Esophagus squamous epithelium (tissue), 5 donors: ENCODE measurements at regions of chr22 and their contacts with region 1.

Region 1: GRCh38 chr22:36144886-36145541 is 15.5 kb downstream of the APOL3 start:
- DNase-seq: no peak
- H3K4me3 ChIP-seq: no peak overlapping the region
- H3K27ac ChIP-seq: peak overlapping the region in 3 of 4 donors; percentile 3 to 48 (median 30)
- H3K4me1 ChIP-seq: peaks cover 0 to 42% (median 15%) of the 10 kb centered on the region in 3 donors
- H3K27me3 ChIP-seq: no peaks in the 10 kb centered on the region
- CTCF ChIP-seq: peak; percentile 52 to 77 (median 70)
- POLR2A ChIP-seq: no peak

Region 2: DNA sequence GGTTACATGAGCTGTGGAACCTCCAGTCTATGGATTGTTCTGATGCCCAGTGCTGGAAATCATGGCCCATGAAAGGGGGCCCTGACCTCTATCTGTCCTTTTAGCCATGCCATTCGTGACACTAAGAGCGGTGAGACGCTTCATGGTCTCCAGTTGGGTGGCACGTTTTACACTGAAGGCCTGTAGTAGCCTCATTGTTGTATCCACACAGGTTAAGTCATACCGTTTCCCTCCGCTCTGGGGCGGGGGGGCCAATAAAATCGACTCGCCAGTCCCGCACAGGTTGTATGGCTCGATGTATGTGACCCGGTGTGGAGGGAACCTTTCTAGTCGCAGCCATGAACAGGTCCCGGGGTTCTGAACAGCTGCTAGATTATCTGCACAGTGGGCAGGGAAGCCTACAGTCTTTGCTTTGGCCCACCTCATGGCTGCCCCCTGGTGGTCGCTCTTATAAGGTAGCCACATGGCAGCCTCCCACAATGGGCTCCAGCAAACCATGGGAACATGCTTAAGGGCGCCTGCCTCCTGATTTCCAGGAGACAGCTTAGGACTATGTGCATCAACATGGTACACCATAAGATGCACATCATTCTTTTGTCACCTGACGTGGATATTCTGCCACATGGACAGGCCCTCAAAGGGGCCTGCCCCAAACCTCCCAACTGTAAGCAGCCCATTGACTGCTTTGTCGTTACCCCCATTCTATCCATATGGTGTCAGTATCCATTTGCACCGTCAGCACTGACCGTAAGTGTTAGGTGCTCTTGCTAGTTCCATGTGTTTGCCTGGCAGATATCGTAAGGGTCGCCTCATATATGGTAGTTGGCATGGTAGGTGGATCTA is 35.2 kb after region 1 on chr22:
- intact Hi-C with region 1: loop called (anchors 5 kb)
- DNase-seq: no peak
- H3K4me3 ChIP-seq: no peak overlapping the region
- H3K27ac ChIP-seq: no peak overlapping the region
- H3K4me1 ChIP-seq: peaks cover 0 to 14% (median 4%) of the 10 kb centered on the region in 3 donors
- H3K27me3 ChIP-seq: no peaks in the 10 kb centered on the region
- CTCF ChIP-seq: peak; percentile 79 to 93 (median 83)
- POLR2A ChIP-seq: no peak